ENCODE measurements at regions of chr17 and their contacts with region 1.

Region 1: DNA sequence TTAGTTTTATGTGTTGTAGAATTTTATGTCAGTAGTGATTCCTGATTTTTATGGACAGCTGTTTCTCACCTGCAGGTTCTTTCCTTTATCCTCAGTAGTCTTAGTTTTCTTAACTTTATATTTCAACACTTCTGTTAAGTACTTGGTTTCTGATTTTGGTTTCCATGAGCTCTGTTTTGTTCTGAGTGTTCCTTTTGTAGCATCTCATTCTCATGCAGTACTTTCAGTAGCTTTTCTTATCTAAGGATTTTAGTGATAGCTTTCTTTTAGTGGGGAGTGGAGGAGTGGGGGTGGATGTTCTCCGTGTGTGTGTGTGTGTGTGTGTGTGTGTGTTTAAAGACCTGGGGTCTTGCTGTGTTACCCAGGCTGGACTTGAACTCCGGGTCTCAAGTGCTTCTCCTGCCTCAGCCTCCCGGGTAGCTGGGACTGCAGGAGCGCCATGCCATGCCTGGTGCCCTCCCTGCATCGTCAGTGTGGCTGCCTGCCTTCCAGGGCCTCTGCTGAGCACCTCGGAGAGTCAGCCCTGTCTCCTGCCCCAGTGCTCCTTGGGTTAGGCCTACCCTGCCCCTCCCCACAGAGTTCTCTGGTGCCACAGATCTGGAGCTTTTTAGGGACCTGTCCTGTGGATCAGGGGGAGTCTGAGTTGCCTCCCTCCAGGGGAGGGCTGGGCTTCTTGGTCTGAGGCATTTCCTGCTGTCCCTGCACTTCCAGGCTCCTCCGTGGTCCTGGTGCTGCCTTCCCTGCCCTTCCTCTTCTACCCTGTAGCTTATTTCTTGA is 4.3 kb upstream of the ZNF750 start:
- DNase-seq: no peak
- H3K4me3 ChIP-seq: no peak overlapping the region
- H3K27ac ChIP-seq: no peak overlapping the region
- H3K4me1 ChIP-seq: peaks cover under 1% of the 10 kb centered on the region
- CTCF ChIP-seq: no peak

Region 2: GRCh38 chr17:82820278-82821251 is 23.5 kb before region 1 on chr17:
- CTCF ChIA-PET with region 1: interaction called, 11 read pairs
- POLR2A ChIA-PET with region 1: interaction called, 9 read pairs
- intact Hi-C with region 1: no loop called
- DNase-seq: peak; percentile 30
- H3K4me3 ChIP-seq: no peak overlapping the region
- H3K27ac ChIP-seq: no peak overlapping the region
- H3K4me1 ChIP-seq: peaks cover 5% of the 10 kb centered on the region
- CTCF ChIP-seq: no peak

Region 3: GRCh38 chr17:82896071-82896970 is 52.2 kb after region 1 on chr17:
- CTCF ChIA-PET with region 1: interaction called, 20 read pairs
- POLR2A ChIA-PET with region 1: no interaction called
- intact Hi-C with region 1: no loop called
- DNase-seq: no peak
- H3K4me3 ChIP-seq: no peak overlapping the region
- H3K27ac ChIP-seq: no peak overlapping the region
- H3K4me1 ChIP-seq: peaks cover 17% of the 10 kb centered on the region
- CTCF ChIP-seq: no peak

Region 4: GRCh38 chr17:82931699-82932517 is 87.8 kb after region 1 on chr17:
- CTCF ChIA-PET with region 1: no interaction called
- POLR2A ChIA-PET with region 1: no interaction called
- intact Hi-C with region 1: no loop called
- DNase-seq: no peak
- H3K4me3 ChIP-seq: no peak overlapping the region
- H3K27ac ChIP-seq: no peak overlapping the region
- H3K4me1 ChIP-seq: no peaks in the 10 kb centered on the region
- CTCF ChIP-seq: no peak

Measured in OCI-LY7 (cell line).